Activated CD8-positive, alpha-beta T cell treated with anti-CD3 and anti-CD28 coated beads, Interleukin-2, amount 10 ng/mL, durations not matched to agents 7 days and 5 days (primary cell): ENCODE measurements at regions of chr11 and their contacts with region 1.

Region 1: GRCh38 chr11:57493507-57494503 is 21.7 kb downstream of the SLC43A1 start:
- DNase-seq: peak; percentile 82
- ATAC-seq: peak; percentile 79
- H3K4me3 Mint-ChIP-seq: no peak overlapping the region
- H3K27ac Mint-ChIP-seq: peak overlapping the region; percentile 86
- H3K4me1 Mint-ChIP-seq: peaks cover 12% of the 10 kb centered on the region
- H3K27me3 Mint-ChIP-seq: no peaks in the 10 kb centered on the region

Region 2: DNA sequence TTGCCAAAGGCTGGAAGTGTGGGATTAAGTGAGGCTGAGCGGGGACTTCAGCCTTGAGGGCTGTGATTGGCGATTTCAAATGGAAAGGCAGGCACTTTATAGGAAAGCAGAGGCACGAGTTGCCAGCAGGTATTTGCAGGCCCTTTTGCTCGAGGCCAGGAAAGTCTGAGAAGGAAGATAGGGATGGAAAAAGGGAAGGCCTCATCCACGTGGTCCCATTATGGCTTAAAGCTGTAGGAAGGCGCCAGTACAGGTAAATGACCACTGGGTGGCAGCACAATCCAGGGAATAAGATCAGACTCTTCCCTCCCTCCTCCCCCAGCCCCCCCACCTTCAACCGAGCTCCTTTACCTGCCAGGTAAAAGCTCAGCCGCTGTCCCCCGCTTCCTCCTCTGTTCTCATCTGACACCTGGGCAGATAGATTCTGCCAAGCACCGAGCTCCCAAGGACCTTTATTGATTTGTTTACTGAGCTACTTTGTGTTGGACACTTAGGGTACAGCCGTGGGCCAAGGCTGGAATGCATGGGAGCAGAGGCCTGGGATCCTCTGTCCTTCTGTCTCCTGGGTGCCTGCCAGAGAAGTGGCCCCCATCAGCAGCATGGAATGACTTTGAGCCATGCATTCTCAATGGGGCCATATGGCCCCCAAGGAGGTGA is 148.1 kb before region 1 on chr11:
- CTCF ChIA-PET with region 1: interaction called, 14 read pairs
- POLR2A ChIA-PET with region 1: no interaction called
- DNase-seq: peak; percentile 76
- ATAC-seq: peak; percentile 62
- H3K4me3 Mint-ChIP-seq: no peak overlapping the region
- H3K27ac Mint-ChIP-seq: no peak overlapping the region
- H3K4me1 Mint-ChIP-seq: peaks cover 3% of the 10 kb centered on the region
- H3K27me3 Mint-ChIP-seq: peaks cover under 1% of the 10 kb centered on the region

Region 3: DNA sequence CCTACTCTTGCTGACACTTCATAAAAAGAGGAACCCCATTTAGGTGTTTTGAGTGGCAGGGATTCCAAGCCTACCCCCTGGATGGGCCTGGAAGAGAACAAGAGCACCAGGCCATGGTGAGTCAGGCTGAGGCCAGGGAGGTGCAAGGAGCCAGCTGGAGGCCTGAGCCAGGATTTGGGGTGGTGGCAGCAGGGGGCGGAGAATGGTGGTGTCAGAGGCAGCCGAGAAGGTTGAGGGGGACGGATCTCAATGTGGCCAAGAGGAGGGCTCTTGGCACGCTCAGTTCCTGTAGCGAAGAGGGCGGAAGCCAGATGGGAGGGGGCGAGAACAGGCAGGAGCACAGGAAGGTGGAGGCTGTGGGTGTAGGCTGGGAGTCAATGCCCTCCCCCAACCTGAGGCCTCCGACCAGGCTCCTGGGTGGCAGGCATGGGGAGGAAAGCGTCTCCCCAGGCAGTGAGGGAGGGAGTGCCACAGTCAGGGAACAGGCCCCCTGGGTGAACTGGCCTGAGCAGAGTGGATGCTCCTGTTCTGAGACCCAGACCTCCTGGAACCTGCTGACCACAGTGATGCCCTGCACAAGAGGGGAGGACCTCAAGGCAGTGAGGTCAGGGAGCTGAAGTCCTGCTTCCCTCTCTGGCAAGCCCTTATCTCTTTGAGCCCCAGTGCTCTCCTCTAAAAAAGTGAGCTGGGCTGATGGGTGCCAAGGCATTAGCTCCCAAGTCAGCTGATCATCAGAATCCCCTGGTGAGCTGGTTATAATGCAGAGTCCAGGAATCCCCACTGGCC is 19.6 kb before region 1 on chr11:
- CTCF ChIA-PET with region 1: interaction called, 35 read pairs
- POLR2A ChIA-PET with region 1: no interaction called
- DNase-seq: peak; percentile 87
- ATAC-seq: peak; percentile 85
- H3K4me3 Mint-ChIP-seq: peak overlapping the region; percentile 28
- H3K27ac Mint-ChIP-seq: peak overlapping the region; percentile 89
- H3K4me1 Mint-ChIP-seq: peaks cover 41% of the 10 kb centered on the region
- H3K27me3 Mint-ChIP-seq: peaks cover 14% of the 10 kb centered on the region

Region 4: DNA sequence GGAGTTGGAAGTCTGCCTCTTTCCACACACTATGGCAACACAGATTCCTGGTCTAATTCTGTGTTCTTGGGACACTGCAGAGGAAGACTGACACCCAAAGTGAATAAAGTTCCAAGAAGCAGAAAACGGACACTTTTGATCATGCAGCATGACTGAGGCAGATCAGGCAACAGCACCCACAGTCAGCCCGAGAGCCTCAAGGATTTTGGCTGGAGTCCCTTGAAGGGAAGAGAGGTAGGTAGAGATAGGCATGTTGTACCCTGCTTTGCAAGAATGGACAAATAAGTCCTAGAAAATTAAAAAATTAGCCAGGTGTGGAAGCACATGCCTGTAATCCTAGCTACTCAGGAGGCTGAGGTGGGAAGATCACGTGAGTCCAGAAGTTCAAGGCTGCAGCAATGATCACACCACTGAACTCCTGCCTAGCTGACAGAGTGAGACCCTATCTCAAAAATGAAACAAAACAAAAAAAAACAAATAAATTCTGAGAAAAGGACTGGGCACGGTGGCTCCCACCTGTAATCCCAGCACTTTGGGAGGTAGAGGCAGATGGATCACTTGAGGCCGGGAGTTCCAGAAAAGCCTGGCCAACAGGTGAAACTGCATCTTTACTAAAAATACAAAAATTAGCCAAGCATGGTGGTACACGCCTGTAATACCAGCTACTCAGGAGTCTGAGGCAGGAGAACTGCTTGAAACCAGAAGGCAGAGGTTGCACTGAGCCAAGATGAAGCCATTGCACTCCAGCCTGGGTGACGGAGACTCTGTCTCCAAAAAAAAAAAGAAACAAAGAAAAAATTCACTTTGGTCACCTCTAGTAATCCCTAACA is 14.8 kb after region 1 on chr11:
- CTCF ChIA-PET with region 1: interaction called, 152 read pairs
- POLR2A ChIA-PET with region 1: no interaction called
- DNase-seq: no peak
- ATAC-seq: no peak
- H3K4me3 Mint-ChIP-seq: no peak overlapping the region
- H3K27ac Mint-ChIP-seq: no peak overlapping the region
- H3K4me1 Mint-ChIP-seq: peaks cover 31% of the 10 kb centered on the region
- H3K27me3 Mint-ChIP-seq: no peaks in the 10 kb centered on the region

Region 5: DNA sequence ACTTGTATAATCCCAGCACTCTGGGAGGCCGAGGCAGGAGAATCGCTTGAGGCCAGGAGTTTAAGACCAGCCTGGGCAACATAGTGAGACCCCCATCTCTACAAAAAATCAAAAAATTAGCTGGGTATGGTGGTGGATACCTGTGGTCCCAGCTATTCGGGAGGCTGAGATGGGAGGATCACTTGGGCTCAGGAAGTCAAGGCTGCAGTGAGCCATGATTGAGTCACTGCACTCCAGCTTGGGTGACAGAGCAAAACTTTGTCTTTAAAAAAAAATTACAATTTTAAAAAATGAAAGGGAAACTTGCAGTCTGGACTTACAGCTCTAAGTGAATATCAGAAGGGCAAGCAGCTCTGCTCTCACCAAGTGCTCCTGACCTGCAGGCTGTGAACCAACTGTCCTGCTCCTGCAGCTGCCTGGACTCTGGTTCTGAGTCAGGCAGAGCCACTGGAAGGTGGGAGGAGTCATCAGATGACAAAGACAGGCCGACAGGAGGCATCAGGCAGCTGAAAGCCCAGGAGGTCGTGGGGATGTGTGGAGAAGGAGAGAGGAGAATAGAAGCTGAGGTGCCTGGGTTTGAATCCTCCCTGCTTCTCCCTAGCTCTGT is 53.2 kb after region 1 on chr11:
- CTCF ChIA-PET with region 1: interaction called, 12 read pairs
- POLR2A ChIA-PET with region 1: interaction called, 4 read pairs
- DNase-seq: no peak
- ATAC-seq: no peak
- H3K4me3 Mint-ChIP-seq: no peak overlapping the region
- H3K27ac Mint-ChIP-seq: peak overlapping the region; percentile 60
- H3K4me1 Mint-ChIP-seq: peaks cover 14% of the 10 kb centered on the region
- H3K27me3 Mint-ChIP-seq: no peaks in the 10 kb centered on the region